Activated T-helper 2 cell treated with anti-CD3 and anti-CD28 coated beads, Interferon-gamma antibody, Interleukin-2, Interleukin-4, amounts not matched to agents 10 μg/mL and 5 μg/mL and 100 μg/mL, durations not matched to agents 14 hours and 24 hours and 36 hours (primary cell): ENCODE measurements at regions of chr17 and their contacts with region 1.

Region 1: DNA sequence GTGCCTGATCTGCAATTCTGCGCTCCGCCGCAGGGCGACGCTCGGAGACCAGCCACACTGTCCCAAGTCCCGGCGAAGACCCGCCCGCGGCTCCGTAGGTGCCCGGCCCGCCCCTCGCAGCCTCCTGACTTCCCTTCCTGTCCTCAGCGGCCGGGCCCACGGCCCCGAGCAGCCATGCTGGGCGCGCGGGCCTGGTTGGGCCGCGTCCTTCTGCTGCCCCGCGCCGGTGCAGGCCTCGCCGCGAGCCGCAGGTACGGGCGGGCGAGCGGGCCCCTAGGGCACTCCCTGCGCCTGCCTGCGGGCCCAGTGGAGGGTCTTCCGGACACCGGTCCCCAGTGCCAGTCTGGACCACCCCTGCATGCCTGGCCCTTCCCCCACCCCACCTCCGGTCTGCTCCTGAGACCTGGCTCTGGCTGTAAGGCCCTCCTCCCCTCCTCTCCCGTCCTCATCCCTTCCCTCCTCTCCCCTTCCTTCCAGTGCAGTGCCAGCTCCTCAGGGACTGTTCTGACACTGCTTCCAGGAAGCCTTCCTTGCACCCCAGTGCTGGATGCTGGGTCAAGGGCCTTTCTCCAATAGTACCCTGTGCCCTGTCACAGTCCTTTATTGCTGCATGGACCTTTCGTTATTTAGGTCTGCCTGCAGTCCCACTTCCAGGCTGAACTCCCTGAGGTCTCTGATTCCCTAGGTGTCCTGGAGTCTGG is at the start of gene SPATA20:
- DNase-seq: peak; percentile 84
- H3K4me3 Mint-ChIP-seq: peak within 1 kb of the TSS; percentile 78
- H3K27ac Mint-ChIP-seq: peak within 1 kb of the TSS; percentile 44
- H3K4me1 Mint-ChIP-seq: peaks cover 10% of the 10 kb centered on the region
- H3K27me3 Mint-ChIP-seq: peaks cover 18% of the 10 kb centered on the region
- total RNA-seq, gene SPATA20: 30.5 and 31.0 TPM in 2 replicates

Region 2: GRCh38 chr17:50478391-50479381 is 68.5 kb before region 1 on chr17 and contains the start of gene RSAD1:
- intact Hi-C with region 1: loop called (anchors 1 kb)
- DNase-seq: peak; percentile 79
- H3K4me3 Mint-ChIP-seq: peak within 1 kb of the TSS; percentile 84
- H3K27ac Mint-ChIP-seq: peak within 1 kb of the TSS; percentile 79
- H3K4me1 Mint-ChIP-seq: peaks cover 18% of the 10 kb centered on the region
- H3K27me3 Mint-ChIP-seq: peaks cover 4% of the 10 kb centered on the region
- total RNA-seq, gene RSAD1: 56.8 and 59.0 TPM in 2 replicates

Region 3: GRCh38 chr17:50491505-50491904 is 55.7 kb before region 1 on chr17:
- intact Hi-C with region 1: no loop called
- DNase-seq: no peak
- H3K4me3 Mint-ChIP-seq: no peak overlapping the region
- H3K27ac Mint-ChIP-seq: no peak overlapping the region
- H3K4me1 Mint-ChIP-seq: no peaks in the 10 kb centered on the region
- H3K27me3 Mint-ChIP-seq: peaks cover 2% of the 10 kb centered on the region

Region 4: GRCh38 chr17:50518384-50519230 is 28.6 kb before region 1 on chr17:
- intact Hi-C with region 1: no loop called
- DNase-seq: no peak
- H3K4me3 Mint-ChIP-seq: no peak overlapping the region
- H3K27ac Mint-ChIP-seq: no peak overlapping the region
- H3K4me1 Mint-ChIP-seq: peaks cover 6% of the 10 kb centered on the region
- H3K27me3 Mint-ChIP-seq: no peaks in the 10 kb centered on the region

Region 5: GRCh38 chr17:50575581-50576210 is 28.5 kb after region 1 on chr17:
- intact Hi-C with region 1: no loop called
- DNase-seq: no peak
- H3K4me3 Mint-ChIP-seq: no peak overlapping the region
- H3K27ac Mint-ChIP-seq: no peak overlapping the region
- H3K4me1 Mint-ChIP-seq: no peaks in the 10 kb centered on the region
- H3K27me3 Mint-ChIP-seq: peaks cover 6% of the 10 kb centered on the region

Region 6: GRCh38 chr17:50626037-50626574 is 78.9 kb after region 1 on chr17:
- intact Hi-C with region 1: loop called (anchors 1 kb)
- DNase-seq: peak; percentile 40
- H3K4me3 Mint-ChIP-seq: no peak overlapping the region
- H3K27ac Mint-ChIP-seq: no peak overlapping the region
- H3K4me1 Mint-ChIP-seq: peaks cover 4% of the 10 kb centered on the region
- H3K27me3 Mint-ChIP-seq: peaks cover 32% of the 10 kb centered on the region

Region 7: GRCh38 chr17:50707289-50708049 is 160.3 kb after region 1 on chr17 and contains the start of gene ANKRD40:
- intact Hi-C with region 1: loop called (anchors 5 kb)
- DNase-seq: peak; percentile 91
- H3K4me3 Mint-ChIP-seq: peak within 1 kb of the TSS; percentile 94
- H3K27ac Mint-ChIP-seq: peak within 1 kb of the TSS; percentile 95
- H3K4me1 Mint-ChIP-seq: peaks cover 28% of the 10 kb centered on the region
- H3K27me3 Mint-ChIP-seq: peaks cover 3% of the 10 kb centered on the region
- total RNA-seq, gene ANKRD40: 37.8 and 39.4 TPM in 2 replicates

Region 8: GRCh38 chr17:50783193-50783660 is 236.0 kb after region 1 on chr17:
- intact Hi-C with region 1: loop called (anchors 2 kb)
- DNase-seq: peak; percentile 75
- H3K4me3 Mint-ChIP-seq: no peak overlapping the region
- H3K27ac Mint-ChIP-seq: no peak overlapping the region
- H3K4me1 Mint-ChIP-seq: peaks cover 19% of the 10 kb centered on the region
- H3K27me3 Mint-ChIP-seq: peaks cover 58% of the 10 kb centered on the region

Region 9: DNA sequence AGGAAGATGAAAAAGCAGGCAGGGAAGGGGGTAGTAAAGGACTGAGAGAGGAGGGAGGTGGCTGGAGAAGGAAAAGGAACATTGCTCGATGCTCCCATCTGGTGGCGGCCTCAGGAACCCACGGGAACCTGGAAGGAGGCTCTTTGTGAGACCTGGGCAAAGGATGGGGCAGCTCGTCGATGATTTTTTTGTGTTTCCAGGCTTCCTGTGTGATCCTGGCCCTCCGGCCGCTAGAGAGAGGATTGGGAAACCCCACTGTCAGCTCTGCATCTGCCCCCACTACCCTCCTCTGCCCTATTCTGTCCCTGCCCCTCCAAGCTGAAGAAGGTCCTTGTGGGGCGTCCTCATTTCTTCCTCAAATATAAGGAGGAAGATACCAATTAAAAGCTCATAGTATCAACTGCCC is 294.8 kb after region 1 on chr17:
- intact Hi-C with region 1: loop called (anchors 2 kb)
- DNase-seq: peak; percentile 38
- H3K4me3 Mint-ChIP-seq: no peak overlapping the region
- H3K27ac Mint-ChIP-seq: no peak overlapping the region
- H3K4me1 Mint-ChIP-seq: no peaks in the 10 kb centered on the region
- H3K27me3 Mint-ChIP-seq: peaks cover 2% of the 10 kb centered on the region

Region 10: DNA sequence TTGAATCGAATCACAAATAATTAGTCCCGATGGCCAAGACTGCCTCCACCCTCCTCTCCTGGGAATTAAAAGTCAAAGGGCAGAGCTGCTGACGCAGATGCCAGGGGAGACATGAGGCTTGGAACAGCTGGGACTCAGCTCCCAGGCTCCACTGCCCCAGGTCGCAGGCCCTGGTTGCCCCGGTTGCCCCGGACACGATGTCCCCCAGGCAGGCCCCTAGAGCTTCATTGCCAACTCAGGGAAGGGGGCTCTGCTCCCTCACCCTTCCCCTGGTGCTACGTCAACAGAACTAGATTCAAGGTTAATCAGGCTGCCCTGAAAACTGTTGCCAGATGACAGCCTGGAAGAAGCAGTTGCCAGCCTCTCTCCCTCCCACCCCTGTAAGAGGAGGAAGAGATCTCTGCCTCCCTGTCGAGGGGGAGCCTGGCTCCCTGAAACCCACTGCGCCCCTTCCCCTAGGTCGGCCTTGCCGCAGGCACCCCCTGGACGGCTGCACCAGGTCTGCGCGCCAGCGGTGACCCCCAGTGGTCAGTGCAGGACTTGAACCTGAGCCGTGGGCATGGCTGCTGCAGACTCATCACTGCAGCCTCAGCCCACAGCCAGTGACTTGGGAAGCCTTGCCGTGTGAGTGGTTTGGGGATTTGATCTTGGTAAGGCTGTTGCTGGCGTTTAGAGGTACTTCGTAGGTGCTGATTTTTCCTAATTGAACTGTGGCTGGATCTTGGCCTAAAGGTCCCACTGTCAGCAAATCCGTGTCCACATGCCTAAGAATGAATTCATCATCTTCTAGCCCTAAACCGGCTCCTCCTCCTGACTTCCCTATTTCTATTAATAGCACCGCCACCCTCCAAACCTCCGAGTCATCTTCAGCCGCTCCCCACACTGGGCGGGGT is 403.1 kb after region 1 on chr17:
- intact Hi-C with region 1: loop called (anchors 10 kb)
- DNase-seq: no peak
- H3K4me3 Mint-ChIP-seq: no peak overlapping the region
- H3K27ac Mint-ChIP-seq: no peak overlapping the region
- H3K4me1 Mint-ChIP-seq: peaks cover 14% of the 10 kb centered on the region
- H3K27me3 Mint-ChIP-seq: no peaks in the 10 kb centered on the region